HepG2 (cell line): ENCODE measurements at regions of chr4 and their contacts with region 1.

Region 1: DNA sequence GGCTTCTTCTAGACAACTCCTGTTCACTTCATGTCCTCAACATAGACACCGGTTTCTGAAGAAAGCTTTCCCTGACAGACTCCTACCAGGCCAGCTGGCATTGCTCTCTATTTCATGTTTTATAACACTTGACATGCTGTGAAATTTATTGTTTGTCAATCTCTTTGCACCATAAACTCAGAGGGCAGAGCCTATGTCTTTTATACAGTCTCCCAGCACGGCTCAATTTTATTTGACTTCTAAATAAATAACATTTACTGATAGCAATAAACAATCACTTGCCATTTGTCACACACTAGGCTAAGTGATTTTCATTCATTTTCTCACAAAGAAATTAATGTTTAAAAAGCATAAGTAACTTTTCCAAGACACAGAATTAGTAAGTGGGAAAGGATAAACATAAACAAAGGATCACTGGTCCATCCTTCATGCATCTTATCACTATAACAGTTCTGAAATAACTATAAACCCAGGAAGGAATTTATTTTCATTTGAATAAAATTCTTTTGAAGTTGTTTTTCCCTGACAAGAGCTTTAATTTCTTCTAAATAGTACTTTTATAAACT is 577.6 kb downstream of the TECRL start:
- DNase-seq: no peak
- ATAC-seq: no peak
- H3K4me3 ChIP-seq: no peak overlapping the region
- H3K27ac ChIP-seq: no peak overlapping the region
- H3K4me1 ChIP-seq: no peaks in the 10 kb centered on the region
- H3K27me3 ChIP-seq: no peaks in the 10 kb centered on the region
- CTCF ChIP-seq: no peak
- EP300 ChIP-seq: no peak
- POLR2A ChIP-seq: no peak
- RAD21 ChIP-seq: no peak

Region 2: GRCh38 chr4:63851496-63851895 is 19.8 kb after region 1 on chr4:
- CTCF ChIA-PET with region 1: no interaction called
- POLR2A ChIA-PET with region 1: no interaction called
- in situ Hi-C with region 1: no loop called
- intact Hi-C with region 1: loop called (anchors 2 kb)
- DNase-seq: no peak
- ATAC-seq: no peak
- H3K4me3 ChIP-seq: no peak overlapping the region
- H3K27ac ChIP-seq: no peak overlapping the region
- H3K4me1 ChIP-seq: no peaks in the 10 kb centered on the region
- H3K27me3 ChIP-seq: no peaks in the 10 kb centered on the region
- CTCF ChIP-seq: no peak
- EP300 ChIP-seq: no peak
- POLR2A ChIP-seq: no peak
- RAD21 ChIP-seq: no peak